IMR-90 (cell line): ENCODE measurements at regions of chr12 and their contacts with region 1.

Region 1: DNA sequence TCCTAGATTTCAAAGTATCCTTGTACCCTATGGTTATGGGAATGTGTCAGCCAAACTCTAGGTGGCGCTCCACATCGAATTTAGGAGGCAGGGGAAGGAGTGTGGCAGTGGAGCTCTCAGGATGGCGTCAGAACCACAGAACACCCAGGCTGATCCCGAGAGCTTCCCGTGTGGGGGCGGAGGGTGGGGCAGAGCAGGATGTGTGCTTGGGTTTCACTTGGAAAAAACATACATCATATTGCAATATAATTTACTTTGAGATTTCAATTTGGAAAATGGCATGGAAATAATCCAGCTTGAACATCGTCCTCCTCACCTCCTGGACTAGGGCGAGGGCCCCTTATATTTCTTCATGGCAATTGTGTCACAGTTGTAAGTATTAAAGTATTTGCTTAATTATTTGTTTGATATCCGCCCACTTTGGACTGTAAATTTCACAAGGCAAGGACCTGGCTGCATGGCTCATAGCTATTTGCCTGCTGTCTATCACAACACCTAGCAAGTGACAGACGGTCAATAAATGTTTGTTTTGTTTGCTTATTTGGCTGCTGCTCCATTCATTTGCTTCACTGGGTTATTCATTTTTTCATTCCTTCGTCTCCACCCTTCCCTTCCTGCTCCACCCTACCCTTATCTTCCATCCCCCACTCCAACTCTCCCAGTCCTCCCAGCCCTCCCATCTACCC is 221.5 kb upstream of the HMGA2 start:
- DNase-seq: peak; percentile 97
- ATAC-seq: peak; percentile 92
- H3K4me3 ChIP-seq: peak overlapping the region; percentile 50
- H3K27ac ChIP-seq: peak overlapping the region; percentile 95
- H3K4me1 ChIP-seq: peaks cover 12% of the 10 kb centered on the region
- H3K27me3 ChIP-seq: no peaks in the 10 kb centered on the region
- CTCF ChIP-seq: peak; percentile 89
- POLR2A ChIP-seq: peak; percentile 74
- RAD21 ChIP-seq: peak; percentile 93

Region 2: GRCh38 chr12:65269603-65270002 is 333.1 kb before region 1 on chr12:
- CTCF ChIA-PET with region 1: no interaction called
- POLR2A ChIA-PET with region 1: no interaction called
- dilution Hi-C with region 1: no loop called
- in situ Hi-C with region 1: no loop called
- intact Hi-C with region 1: no loop called
- DNase-seq: no peak
- ATAC-seq: no peak
- H3K4me3 ChIP-seq: no peak overlapping the region
- H3K27ac ChIP-seq: no peak overlapping the region
- H3K4me1 ChIP-seq: no peaks in the 10 kb centered on the region
- H3K27me3 ChIP-seq: no peaks in the 10 kb centered on the region
- CTCF ChIP-seq: no peak
- POLR2A ChIP-seq: no peak
- RAD21 ChIP-seq: no peak

Region 3: GRCh38 chr12:65536876-65537661 is 65.7 kb before region 1 on chr12:
- CTCF ChIA-PET with region 1: no interaction called
- POLR2A ChIA-PET with region 1: no interaction called
- dilution Hi-C with region 1: no loop called
- in situ Hi-C with region 1: no loop called
- intact Hi-C with region 1: loop called (anchors 1 kb)
- DNase-seq: peak; percentile 100
- ATAC-seq: peak; percentile 91
- H3K4me3 ChIP-seq: no peak overlapping the region
- H3K27ac ChIP-seq: peak overlapping the region; percentile 76
- H3K4me1 ChIP-seq: peaks cover 39% of the 10 kb centered on the region
- H3K27me3 ChIP-seq: no peaks in the 10 kb centered on the region
- CTCF ChIP-seq: no peak
- POLR2A ChIP-seq: no peak; the same call in none of the 2 replicates
- RAD21 ChIP-seq: peak; percentile 38; the same call in 1 of the 2 replicates

Region 4: DNA sequence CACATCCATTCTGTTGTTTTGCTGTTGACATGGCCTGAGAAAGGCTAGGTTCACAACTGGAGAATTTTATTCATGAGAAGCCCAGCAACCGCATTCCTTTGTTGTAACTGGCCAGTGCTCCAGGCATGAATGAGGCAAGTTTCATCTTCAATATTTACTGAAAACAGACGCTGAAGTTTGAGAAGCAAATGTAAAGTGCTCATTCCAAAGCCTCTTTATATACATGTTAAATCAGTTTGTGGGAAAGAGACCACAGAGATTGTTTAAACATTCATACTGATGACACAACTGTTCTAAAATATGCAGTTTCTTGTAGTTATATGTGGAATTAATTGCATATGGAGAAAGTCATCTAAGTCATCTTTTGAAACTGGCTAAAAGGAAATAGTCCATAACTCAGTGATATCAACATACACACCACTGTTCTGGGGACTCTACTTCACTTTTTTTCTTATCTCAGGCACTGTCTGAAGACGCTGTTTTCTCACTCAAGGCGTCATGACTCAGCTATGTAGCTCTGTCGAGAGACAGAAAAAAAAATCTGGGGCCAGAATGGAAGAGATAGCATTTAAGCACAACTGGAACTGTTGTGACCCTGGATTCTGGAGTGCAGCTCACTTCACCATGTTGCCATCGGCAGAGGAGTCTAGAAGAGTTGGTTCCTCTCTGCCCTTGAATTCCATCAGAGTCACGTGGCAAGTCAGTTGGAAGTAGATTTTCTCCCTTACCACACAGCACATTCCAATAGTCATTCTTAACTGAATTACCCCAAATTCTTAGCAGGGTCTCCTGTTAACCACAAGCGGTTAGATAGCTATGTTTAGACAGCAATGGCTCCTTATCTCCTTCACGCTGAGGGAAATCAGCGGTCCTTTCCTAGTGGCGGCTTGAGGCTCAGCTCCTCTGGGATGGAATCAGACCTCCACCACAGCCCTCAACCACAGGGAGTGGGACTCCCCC is 36.9 kb before region 1 on chr12:
- CTCF ChIA-PET with region 1: interaction called, 13 read pairs
- POLR2A ChIA-PET with region 1: interaction called, 10 read pairs
- dilution Hi-C with region 1: no loop called
- in situ Hi-C with region 1: no loop called
- intact Hi-C with region 1: loop called (anchors 1 kb)
- DNase-seq: peak; percentile 99
- ATAC-seq: peak; percentile 78
- H3K4me3 ChIP-seq: peak overlapping the region; percentile 13; the same call in 1 of the 2 replicates
- H3K27ac ChIP-seq: peak overlapping the region; percentile 98
- H3K4me1 ChIP-seq: peaks cover 25% of the 10 kb centered on the region
- H3K27me3 ChIP-seq: no peaks in the 10 kb centered on the region
- CTCF ChIP-seq: 0 out of 2 replicates have a peak, but pooled peaks have one; percentile 0
- POLR2A ChIP-seq: peak; percentile 72; the same call in 1 of the 2 replicates
- RAD21 ChIP-seq: peak; percentile 13

Region 5: GRCh38 chr12:65622056-65622455 is 19.3 kb after region 1 on chr12:
- CTCF ChIA-PET with region 1: no interaction called
- POLR2A ChIA-PET with region 1: no interaction called
- dilution Hi-C with region 1: no loop called
- in situ Hi-C with region 1: no loop called
- intact Hi-C with region 1: no loop called
- DNase-seq: no peak
- ATAC-seq: no peak
- H3K4me3 ChIP-seq: no peak overlapping the region
- H3K27ac ChIP-seq: no peak overlapping the region
- H3K4me1 ChIP-seq: peaks cover 6% of the 10 kb centered on the region; the same call in 1 of the 2 replicates
- H3K27me3 ChIP-seq: no peaks in the 10 kb centered on the region
- CTCF ChIP-seq: no peak
- POLR2A ChIP-seq: no peak
- RAD21 ChIP-seq: no peak

Region 6: GRCh38 chr12:65657635-65658034 is 54.9 kb after region 1 on chr12:
- CTCF ChIA-PET with region 1: interaction called, 10 read pairs
- POLR2A ChIA-PET with region 1: no interaction called
- dilution Hi-C with region 1: no loop called
- in situ Hi-C with region 1: no loop called
- intact Hi-C with region 1: no loop called
- DNase-seq: no peak
- ATAC-seq: no peak
- H3K4me3 ChIP-seq: no peak overlapping the region
- H3K27ac ChIP-seq: peak overlapping the region; percentile 49
- H3K4me1 ChIP-seq: peaks cover 15% of the 10 kb centered on the region
- H3K27me3 ChIP-seq: no peaks in the 10 kb centered on the region
- CTCF ChIP-seq: no peak
- POLR2A ChIP-seq: no peak
- RAD21 ChIP-seq: no peak

Region 7: DNA sequence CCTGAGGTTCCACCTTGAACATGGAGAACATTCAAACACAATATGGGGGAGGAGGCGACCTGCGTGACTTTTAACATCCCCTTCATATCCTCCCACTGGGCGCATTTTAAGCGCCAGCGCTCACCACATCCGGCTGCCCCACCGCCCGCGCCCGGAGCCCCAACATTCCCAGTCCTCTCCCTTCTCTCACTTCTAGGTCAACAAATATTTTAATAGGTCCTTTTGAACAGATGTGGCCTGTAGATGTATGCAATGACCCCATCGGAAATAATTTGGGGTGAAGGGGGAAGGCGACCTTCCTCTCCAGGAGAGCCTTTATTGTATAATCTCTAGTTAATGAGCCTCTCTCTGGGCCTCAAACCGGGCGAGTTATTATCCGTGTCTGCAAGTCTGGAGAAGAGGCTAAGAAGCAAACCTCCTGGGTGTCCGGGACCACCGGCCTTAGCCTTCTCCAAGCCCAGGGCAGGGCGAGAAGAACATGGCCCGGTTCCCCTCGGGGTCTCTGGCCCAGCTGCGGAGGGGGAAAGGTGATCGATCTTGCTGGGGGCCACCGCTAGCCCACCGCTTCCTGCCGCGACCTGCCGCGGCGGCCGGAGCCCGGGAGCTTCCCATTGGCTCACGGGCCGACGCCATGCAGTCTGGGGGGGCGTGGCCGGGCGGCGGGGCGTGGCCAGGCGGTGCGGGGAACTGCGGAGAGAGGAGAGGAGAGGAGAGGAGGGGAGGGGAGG is 138.3 kb after region 1 on chr12:
- CTCF ChIA-PET with region 1: interaction called, 3 read pairs
- POLR2A ChIA-PET with region 1: no interaction called
- dilution Hi-C with region 1: no loop called
- in situ Hi-C with region 1: no loop called
- intact Hi-C with region 1: loop called (anchors 2 kb)
- DNase-seq: peak; percentile 74
- ATAC-seq: peak; percentile 98
- H3K4me3 ChIP-seq: peak overlapping the region; percentile 83
- H3K27ac ChIP-seq: peak overlapping the region; percentile 76
- H3K4me1 ChIP-seq: peaks cover 2% of the 10 kb centered on the region; the same call in 1 of the 2 replicates
- H3K27me3 ChIP-seq: no peaks in the 10 kb centered on the region
- CTCF ChIP-seq: no peak
- POLR2A ChIP-seq: peak; percentile 52; the same call in 1 of the 2 replicates
- RAD21 ChIP-seq: no peak

Region 8: DNA sequence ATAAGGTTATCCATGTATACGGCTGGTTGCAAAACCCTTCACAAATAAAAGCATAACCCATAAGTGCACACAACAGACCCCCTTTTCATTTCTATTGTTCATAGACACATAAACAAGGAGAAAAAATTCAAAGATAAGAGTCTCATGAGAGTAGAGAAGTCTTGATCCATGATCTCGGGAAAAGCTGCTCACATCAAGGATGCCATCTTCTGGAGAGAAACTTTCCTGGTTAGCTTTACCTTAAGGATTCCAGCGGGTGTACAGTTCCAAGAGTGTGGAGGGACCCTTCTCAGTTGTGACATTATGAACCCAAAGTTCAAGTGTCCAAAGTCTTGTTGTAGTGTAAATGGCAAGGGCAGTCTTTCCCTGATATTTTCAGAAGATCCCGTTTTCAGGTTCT is 383.3 kb after region 1 on chr12:
- CTCF ChIA-PET with region 1: no interaction called
- POLR2A ChIA-PET with region 1: no interaction called
- dilution Hi-C with region 1: no loop called
- in situ Hi-C with region 1: no loop called
- intact Hi-C with region 1: loop called (anchors 5 kb)
- DNase-seq: no peak
- ATAC-seq: no peak
- H3K4me3 ChIP-seq: no peak overlapping the region
- H3K27ac ChIP-seq: no peak overlapping the region
- H3K4me1 ChIP-seq: no peaks in the 10 kb centered on the region
- H3K27me3 ChIP-seq: no peaks in the 10 kb centered on the region
- CTCF ChIP-seq: no peak
- POLR2A ChIP-seq: no peak
- RAD21 ChIP-seq: no peak